Heart left ventricle (tissue), 16 donors: ENCODE measurements at regions of chr9 and their contacts with region 1.

Region 1: GRCh38 chr9:127785023-127785932 is 556 bp upstream of the CDK9 start:
- DNase-seq: peak; percentile 89 to 95 (median 90)
- ATAC-seq: peak; percentile 25 to 71 (median 64)
- H3K4me3 ChIP-seq: peak overlapping the region; percentile 76 to 100 (median 98)
- H3K27ac ChIP-seq: peak overlapping the region; percentile 88 to 100 (median 96)
- H3K4me1 ChIP-seq: peaks cover 0 to 78% (median 45%) of the 10 kb centered on the region in 12 donors
- H3K27me3 ChIP-seq: no peaks in the 10 kb centered on the region
- CTCF ChIP-seq: peak; percentile 77 to 97 (median 91)
- POLR2A ChIP-seq: no peak

Region 2: GRCh38 chr9:127503947-127504782 is 281.1 kb before region 1 on chr9:
- intact Hi-C with region 1: loop called in 1 of 10 experiments (anchors 5 kb)
- DNase-seq: peak; percentile 82 to 91 (median 88)
- ATAC-seq: peak; percentile 75 to 86 (median 79)
- H3K4me3 ChIP-seq: no peak overlapping the region
- H3K27ac ChIP-seq: peak overlapping the region in 3 of 12 donors; percentile 17 to 24 (median 19)
- H3K4me1 ChIP-seq: peaks cover 0 to 3% (median under 1%) of the 10 kb centered on the region in 12 donors
- H3K27me3 ChIP-seq: no peaks in the 10 kb centered on the region
- CTCF ChIP-seq: peak; percentile 84 to 94 (median 90)
- POLR2A ChIP-seq: peak in 1 of 2 donors; percentile 15

Region 3: GRCh38 chr9:127763918-127764384 is 21.3 kb before region 1 on chr9:
- intact Hi-C with region 1: loop called in 2 of 10 experiments (anchors 1 to 2 kb)
- DNase-seq: peak; percentile 73 to 85 (median 81)
- ATAC-seq: peak; percentile 66 to 83 (median 76)
- H3K4me3 ChIP-seq: no peak overlapping the region
- H3K27ac ChIP-seq: peak overlapping the region; percentile 45 to 96 (median 88)
- H3K4me1 ChIP-seq: peaks cover 9 to 97% (median 55%) of the 10 kb centered on the region in 12 donors
- H3K27me3 ChIP-seq: peaks cover 0 to 2% (median 0%) of the 10 kb centered on the region in 9 donors
- CTCF ChIP-seq: peak in 11 of 12 donors; percentile 37 to 63 (median 48)
- POLR2A ChIP-seq: peak in 1 of 2 donors; percentile 23

Region 4: DNA sequence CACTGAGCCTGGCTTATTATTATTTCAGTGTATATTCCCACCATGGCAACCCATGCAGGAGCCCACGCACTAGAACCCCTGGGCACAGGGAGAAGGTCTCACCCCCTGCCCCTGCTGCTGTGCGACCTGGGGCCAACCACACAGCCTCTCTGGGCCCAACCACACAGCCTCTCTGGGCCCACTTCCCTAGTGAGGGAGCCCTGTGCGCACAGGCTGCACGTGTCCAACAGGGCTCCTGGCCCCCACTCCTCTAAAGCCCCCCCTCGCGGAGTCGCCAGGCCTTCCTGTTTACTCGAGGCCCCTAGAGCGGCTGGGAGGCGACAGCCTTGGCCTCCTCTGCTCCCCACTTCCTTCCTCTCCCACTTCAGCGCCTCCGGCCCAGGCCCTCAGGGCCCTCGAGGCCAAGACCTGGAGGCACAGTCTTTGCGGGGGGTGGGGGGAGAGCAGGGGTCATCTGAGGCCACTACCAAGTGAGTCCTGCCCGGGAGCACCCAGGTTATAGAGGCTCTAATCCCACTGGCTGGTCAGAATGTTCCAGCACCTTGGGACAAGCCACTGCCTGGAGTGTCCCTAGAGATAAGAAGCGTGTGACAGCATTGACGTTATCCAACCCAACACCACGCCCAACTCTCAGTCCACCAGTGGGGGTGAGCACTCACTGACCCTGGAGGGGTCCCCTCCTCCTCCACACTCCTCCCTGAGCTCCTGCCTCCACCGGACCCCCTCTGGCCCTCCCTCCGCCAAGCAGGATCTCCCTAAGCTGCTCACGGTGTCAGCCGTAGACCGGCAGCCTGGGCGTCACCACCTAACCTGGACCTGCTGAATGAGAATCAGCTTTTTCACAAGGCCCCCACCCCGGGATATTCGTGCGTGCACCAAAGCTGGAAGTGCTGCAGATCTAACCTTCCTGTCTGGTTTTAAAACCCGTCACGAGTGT is 77.1 kb after region 1 on chr9:
- intact Hi-C with region 1: loop called in 2 of 10 experiments (anchors 5 kb)
- DNase-seq: peak; percentile 93 to 95 (median 93)
- ATAC-seq: peak; percentile 76 to 86 (median 84)
- H3K4me3 ChIP-seq: peak overlapping the region in 3 of 12 donors; percentile 2 to 12 (median 11)
- H3K27ac ChIP-seq: peak overlapping the region; percentile 80 to 98 (median 94)
- H3K4me1 ChIP-seq: peaks cover 34 to 79% (median 64%) of the 10 kb centered on the region in 12 donors
- H3K27me3 ChIP-seq: no peaks in the 10 kb centered on the region
- CTCF ChIP-seq: no peak
- POLR2A ChIP-seq: no peak

Region 5: GRCh38 chr9:127916665-127917613 is 131.7 kb after region 1 on chr9 and contains the start of gene ST6GALNAC4:
- intact Hi-C with region 1: loop called in 8 of 10 experiments (anchors 2 to 5 kb)
- DNase-seq: peak; percentile 94 to 98 (median 95)
- ATAC-seq: peak; percentile 87 to 96 (median 92)
- H3K4me3 ChIP-seq: peak within 1 kb of the TSS; percentile 38 to 88 (median 76)
- H3K27ac ChIP-seq: peak within 1 kb of the TSS; percentile 5 to 81 (median 58)
- H3K4me1 ChIP-seq: peaks cover 7 to 60% (median 42%) of the 10 kb centered on the region in 12 donors
- H3K27me3 ChIP-seq: no peaks in the 10 kb centered on the region
- CTCF ChIP-seq: no peak
- POLR2A ChIP-seq: peak in 1 of 2 donors; percentile 45
- total RNA-seq, gene ST6GALNAC4: 28.3 to 66.1 (median 42.6) TPM